ENCODE measurements at regions of chr13 and their contacts with region 1.

Region 1: GRCh38 chr13:33204130-33204927 is 81.2 kb downstream of the STARD13 start:
- DNase-seq: peak; percentile 63 to 90 (median 87)
- ATAC-seq: peak; percentile 59 to 84 (median 82)
- H3K4me3 ChIP-seq: peak overlapping the region in 11 of 12 donors; percentile 15 to 63 (median 47)
- H3K27ac ChIP-seq: peak overlapping the region; percentile 65 to 90 (median 82)
- H3K4me1 ChIP-seq: peaks cover 3 to 94% (median 79%) of the 10 kb centered on the region in 12 donors
- H3K27me3 ChIP-seq: no peaks in the 10 kb centered on the region
- CTCF ChIP-seq: no peak
- POLR2A ChIP-seq: no peak

Region 2: GRCh38 chr13:33090755-33091414 is 113.4 kb before region 1 on chr13:
- intact Hi-C with region 1: no loop called
- DNase-seq: no peak
- ATAC-seq: no peak
- H3K4me3 ChIP-seq: no peak overlapping the region
- H3K27ac ChIP-seq: peak overlapping the region in 2 of 12 donors; percentile 3 to 68
- H3K4me1 ChIP-seq: peaks cover 0 to 16% (median 1%) of the 10 kb centered on the region in 12 donors
- H3K27me3 ChIP-seq: no peaks in the 10 kb centered on the region
- CTCF ChIP-seq: no peak
- POLR2A ChIP-seq: no peak

Region 3: DNA sequence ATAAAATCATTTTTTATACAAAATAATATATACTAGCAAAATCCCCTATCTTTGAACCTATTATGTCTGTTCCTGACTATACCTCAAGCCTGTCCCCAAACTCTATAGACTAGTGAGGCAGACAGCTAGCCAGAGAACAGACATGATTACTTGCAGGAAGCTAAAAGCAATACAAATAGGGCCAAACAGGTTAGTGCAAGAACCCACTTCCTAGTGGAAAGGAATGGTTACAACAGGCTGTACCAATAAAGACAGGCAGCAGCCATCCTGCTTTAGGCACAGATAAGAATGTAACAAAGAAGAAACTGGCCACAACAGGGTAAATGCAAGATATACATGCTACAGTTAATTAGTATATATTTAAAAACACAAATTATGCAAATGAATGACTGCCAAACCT is 48.7 kb before region 1 on chr13:
- intact Hi-C with region 1: loop called in 1 of 10 experiments (anchors 5 kb)
- DNase-seq: no peak
- ATAC-seq: no peak
- H3K4me3 ChIP-seq: no peak overlapping the region
- H3K27ac ChIP-seq: no peak overlapping the region
- H3K4me1 ChIP-seq: peaks cover 0 to 42% (median 12%) of the 10 kb centered on the region in 12 donors
- H3K27me3 ChIP-seq: no peaks in the 10 kb centered on the region
- CTCF ChIP-seq: no peak
- POLR2A ChIP-seq: no peak

Measured in heart left ventricle (tissue), 16 donors.